Ovary (tissue), 10 donors: ENCODE measurements at regions of chr11 and their contacts with region 1.

Region 1: GRCh38 chr11:62535802-62536201 is 10.8 kb downstream of the AHNAK start:
- DNase-seq: no peak
- H3K4me3 ChIP-seq: no peak overlapping the region
- H3K27ac ChIP-seq: no peak overlapping the region
- H3K4me1 ChIP-seq: peaks cover 27% of the 10 kb centered on the region
- H3K27me3 ChIP-seq: no peaks in the 10 kb centered on the region
- CTCF ChIP-seq: no peak
- EP300 ChIP-seq: no peak
- POLR2A ChIP-seq: no peak

Region 2: DNA sequence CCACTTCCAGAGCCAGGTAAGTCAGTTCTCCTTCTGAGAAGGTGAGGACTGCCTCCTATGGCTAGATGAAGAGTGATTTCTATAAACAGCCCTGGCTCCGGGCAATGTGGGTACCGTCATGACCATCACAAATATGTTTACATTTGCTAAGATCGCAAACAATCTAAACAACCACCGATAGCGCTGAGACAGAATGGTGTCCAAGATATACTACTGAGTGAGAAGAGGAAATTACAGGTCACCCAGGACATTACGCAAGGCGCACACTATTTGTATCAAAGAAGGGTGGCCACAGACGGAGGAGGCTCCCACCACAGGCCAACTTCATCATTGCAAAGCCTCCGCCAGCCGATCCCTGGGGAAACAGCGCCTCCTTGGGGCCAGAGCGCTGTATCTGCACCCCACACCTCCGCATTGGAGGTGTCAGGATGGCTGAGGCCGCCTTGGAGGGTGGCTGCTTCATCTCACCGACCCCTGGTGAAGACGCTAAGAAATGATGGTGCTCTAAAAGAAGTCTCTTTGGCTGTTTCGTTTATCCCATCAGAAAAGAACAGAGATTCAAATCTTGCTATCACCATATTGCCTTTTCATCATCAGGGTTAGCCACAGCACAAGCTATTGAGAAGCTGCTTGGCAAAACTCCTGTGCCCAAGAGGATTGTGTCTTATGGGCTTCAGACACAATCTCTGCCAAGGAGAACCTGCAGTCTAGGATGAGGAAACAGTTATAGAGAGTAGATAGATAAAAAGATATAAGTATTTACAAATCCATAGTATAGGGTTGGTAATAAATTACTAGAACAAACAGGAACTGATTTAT is 210.9 kb before region 1 on chr11:
- intact Hi-C with region 1: no loop called
- DNase-seq: no peak
- H3K4me3 ChIP-seq: no peak overlapping the region
- H3K27ac ChIP-seq: no peak overlapping the region
- H3K4me1 ChIP-seq: no peaks in the 10 kb centered on the region
- H3K27me3 ChIP-seq: no peaks in the 10 kb centered on the region
- CTCF ChIP-seq: no peak
- EP300 ChIP-seq: no peak
- POLR2A ChIP-seq: no peak

Region 3: DNA sequence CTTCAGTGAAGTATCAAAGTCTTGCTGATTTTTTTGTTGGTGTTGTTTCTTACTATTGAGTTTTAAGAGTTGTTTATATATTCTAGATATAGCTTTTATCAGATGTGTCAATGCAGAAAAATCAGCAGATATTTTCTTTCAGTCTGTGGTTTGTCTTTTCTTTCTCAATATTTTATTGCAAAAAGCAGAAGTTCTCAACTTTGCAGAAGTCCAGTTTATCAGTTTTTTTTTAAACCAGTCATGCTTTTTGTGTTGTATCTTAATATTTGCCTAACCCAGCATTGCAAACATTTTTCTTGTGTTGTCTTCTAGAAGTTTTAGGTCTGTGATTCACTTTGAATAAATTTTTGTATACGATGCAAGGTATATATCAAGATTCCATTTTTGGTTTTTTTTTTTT is 191.6 kb before region 1 on chr11:
- intact Hi-C with region 1: no loop called
- DNase-seq: no peak
- H3K4me3 ChIP-seq: no peak overlapping the region
- H3K27ac ChIP-seq: no peak overlapping the region
- H3K4me1 ChIP-seq: no peaks in the 10 kb centered on the region
- H3K27me3 ChIP-seq: no peaks in the 10 kb centered on the region
- CTCF ChIP-seq: no peak
- EP300 ChIP-seq: no peak
- POLR2A ChIP-seq: no peak

Region 4: GRCh38 chr11:62513626-62514025 is 22.2 kb before region 1 on chr11:
- intact Hi-C with region 1: loop called in 1 of 4 experiments (anchors 2 kb)
- DNase-seq: no peak
- H3K4me3 ChIP-seq: no peak overlapping the region
- H3K27ac ChIP-seq: no peak overlapping the region
- H3K4me1 ChIP-seq: peaks cover 1% of the 10 kb centered on the region
- H3K27me3 ChIP-seq: no peaks in the 10 kb centered on the region
- CTCF ChIP-seq: no peak
- EP300 ChIP-seq: no peak
- POLR2A ChIP-seq: no peak

Region 5: GRCh38 chr11:62591448-62592145 is 55.8 kb after region 1 on chr11 and contains the start of gene TUT1:
- intact Hi-C with region 1: no loop called
- DNase-seq: peak; percentile 93 to 97 (median 95)
- H3K4me3 ChIP-seq: peak within 1 kb of the TSS; percentile 86
- H3K27ac ChIP-seq: peak within 1 kb of the TSS; percentile 80 to 88
- H3K4me1 ChIP-seq: peaks cover 3% of the 10 kb centered on the region
- H3K27me3 ChIP-seq: no peaks in the 10 kb centered on the region
- CTCF ChIP-seq: no peak
- EP300 ChIP-seq: peak; percentile 5
- POLR2A ChIP-seq: peak; percentile 91
- total RNA-seq, gene TUT1: 6.9 to 27.3 (median 21.1) TPM